Esophagus muscularis mucosa (tissue), 4 donors: ENCODE measurements at regions of chr2 and their contacts with region 1.

Region 1: GRCh38 chr2:41572164-41572563 is 475.7 kb upstream of the PKDCC start:
- DNase-seq: no peak
- H3K4me3 ChIP-seq: no peak overlapping the region
- H3K27ac ChIP-seq: no peak overlapping the region
- H3K4me1 ChIP-seq: peaks cover 0 to 7% (median 0%) of the 10 kb centered on the region in 4 donors
- H3K27me3 ChIP-seq: no peaks in the 10 kb centered on the region
- CTCF ChIP-seq: no peak
- EP300 ChIP-seq: no peak
- POLR2A ChIP-seq: no peak

Region 2: GRCh38 chr2:40680547-40680946 is 891.6 kb before region 1 on chr2:
- intact Hi-C with region 1: no loop called
- DNase-seq: no peak
- H3K4me3 ChIP-seq: peak overlapping the region; percentile 5 to 34 (median 24)
- H3K27ac ChIP-seq: no peak overlapping the region
- H3K4me1 ChIP-seq: peaks cover 0 to 14% (median 0%) of the 10 kb centered on the region in 4 donors
- H3K27me3 ChIP-seq: no peaks in the 10 kb centered on the region
- CTCF ChIP-seq: no peak
- EP300 ChIP-seq: no peak
- POLR2A ChIP-seq: no peak

Region 3: GRCh38 chr2:41194230-41194629 is 377.9 kb before region 1 on chr2:
- intact Hi-C with region 1: no loop called
- DNase-seq: no peak
- H3K4me3 ChIP-seq: no peak overlapping the region
- H3K27ac ChIP-seq: no peak overlapping the region
- H3K4me1 ChIP-seq: no peaks in the 10 kb centered on the region
- H3K27me3 ChIP-seq: no peaks in the 10 kb centered on the region
- CTCF ChIP-seq: no peak
- EP300 ChIP-seq: no peak
- POLR2A ChIP-seq: no peak

Region 4: GRCh38 chr2:41234093-41234492 is 338.1 kb before region 1 on chr2:
- intact Hi-C with region 1: loop called (anchors 5 kb)
- DNase-seq: no peak
- H3K4me3 ChIP-seq: no peak overlapping the region
- H3K27ac ChIP-seq: no peak overlapping the region
- H3K4me1 ChIP-seq: no peaks in the 10 kb centered on the region
- H3K27me3 ChIP-seq: no peaks in the 10 kb centered on the region
- CTCF ChIP-seq: no peak
- EP300 ChIP-seq: no peak
- POLR2A ChIP-seq: no peak

Region 5: GRCh38 chr2:41610501-41611190 is 38.5 kb after region 1 on chr2:
- intact Hi-C with region 1: no loop called
- DNase-seq: no peak
- H3K4me3 ChIP-seq: peak overlapping the region; percentile 12 to 29 (median 26)
- H3K27ac ChIP-seq: peak overlapping the region; percentile 77 to 86 (median 81)
- H3K4me1 ChIP-seq: peaks cover 11 to 25% (median 23%) of the 10 kb centered on the region in 4 donors
- H3K27me3 ChIP-seq: no peaks in the 10 kb centered on the region
- CTCF ChIP-seq: no peak
- EP300 ChIP-seq: no peak
- POLR2A ChIP-seq: no peak

Region 6: GRCh38 chr2:41657226-41657625 is 85.1 kb after region 1 on chr2:
- intact Hi-C with region 1: no loop called
- DNase-seq: no peak
- H3K4me3 ChIP-seq: no peak overlapping the region
- H3K27ac ChIP-seq: no peak overlapping the region
- H3K4me1 ChIP-seq: no peaks in the 10 kb centered on the region
- H3K27me3 ChIP-seq: no peaks in the 10 kb centered on the region
- CTCF ChIP-seq: no peak
- EP300 ChIP-seq: no peak
- POLR2A ChIP-seq: no peak